CD8-positive, alpha-beta T cell (primary cell): ENCODE measurements at regions of chr16 and their contacts with region 1.

Region 1: GRCh38 chr16:21708533-21709115 is 44.9 kb downstream of the OTOA start:
- DNase-seq: peak; percentile 76 to 90 (median 82)
- ATAC-seq: peak; percentile 84
- H3K4me3 ChIP-seq: no peak overlapping the region
- H3K4me3 Mint-ChIP-seq: no peak overlapping the region
- H3K27ac ChIP-seq: no peak overlapping the region
- H3K27ac Mint-ChIP-seq: no peak overlapping the region
- H3K4me1 ChIP-seq: peaks cover 3% of the 10 kb centered on the region
- H3K4me1 Mint-ChIP-seq: peaks cover 2% of the 10 kb centered on the region
- H3K27me3 ChIP-seq: no peaks in the 10 kb centered on the region
- H3K27me3 Mint-ChIP-seq: no peaks in the 10 kb centered on the region
- CTCF ChIP-seq: peak; percentile 74

Region 2: GRCh38 chr16:21599233-21600030 is 109.2 kb before region 1 on chr16 and contains the start of gene METTL9:
- CTCF ChIA-PET with region 1: interaction called, 10 read pairs
- POLR2A ChIA-PET with region 1: no interaction called
- intact Hi-C with region 1: no loop called
- DNase-seq: peak; percentile 92 to 97 (median 94)
- ATAC-seq: peak; percentile 91
- H3K4me3 ChIP-seq: peak within 1 kb of the TSS; percentile 69 to 96
- H3K4me3 Mint-ChIP-seq: peak within 1 kb of the TSS; percentile 87
- H3K27ac ChIP-seq: peak within 1 kb of the TSS; percentile 84 to 91
- H3K27ac Mint-ChIP-seq: peak within 1 kb of the TSS; percentile 96
- H3K4me1 ChIP-seq: peaks cover 47% of the 10 kb centered on the region
- H3K4me1 Mint-ChIP-seq: peaks cover 62% of the 10 kb centered on the region
- H3K27me3 ChIP-seq: no peaks in the 10 kb centered on the region
- H3K27me3 Mint-ChIP-seq: no peaks in the 10 kb centered on the region
- CTCF ChIP-seq: no peak
- total RNA-seq, gene METTL9: 93.8 to 99.0 TPM

Region 3: DNA sequence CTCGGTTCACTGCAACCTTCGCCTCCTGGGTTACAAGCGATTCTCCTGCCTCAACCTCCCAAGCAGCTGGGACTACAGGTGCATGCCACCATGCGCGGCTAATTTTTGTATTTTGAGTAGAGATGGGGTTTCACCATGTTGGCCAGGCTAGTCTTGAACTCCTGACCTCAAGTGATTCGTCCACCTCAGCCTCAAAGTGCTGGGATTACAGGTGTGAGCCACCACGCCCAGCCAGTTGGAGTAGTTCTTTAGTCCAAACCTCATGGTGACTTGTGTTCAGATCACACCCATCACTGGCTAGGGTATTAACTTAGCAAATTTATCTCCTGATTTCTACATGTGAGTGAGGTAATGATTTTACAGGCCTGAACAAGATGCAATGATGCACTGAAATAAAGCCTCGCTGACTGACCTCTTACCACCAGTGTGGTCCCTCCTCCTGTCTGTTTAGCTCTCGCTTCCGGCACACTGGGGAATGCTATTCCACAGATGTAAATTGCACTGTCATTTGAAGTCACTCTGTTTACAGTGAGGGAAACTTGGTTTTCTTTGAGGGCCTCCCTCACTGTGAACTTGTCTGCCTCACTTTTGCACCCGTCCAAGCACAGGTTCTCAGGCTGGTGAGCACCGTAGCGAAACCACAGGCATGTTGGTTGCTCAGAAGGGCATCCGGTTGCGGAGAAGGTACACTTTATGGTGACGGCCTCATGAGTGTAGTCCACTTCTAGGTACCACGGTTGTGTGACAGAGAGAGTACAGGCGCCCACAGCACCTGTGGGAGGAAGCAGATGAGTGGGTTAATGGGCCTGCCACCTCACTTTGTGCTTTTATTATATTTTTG is 61.7 kb before region 1 on chr16:
- CTCF ChIA-PET with region 1: interaction called, 109 read pairs
- POLR2A ChIA-PET with region 1: no interaction called
- intact Hi-C with region 1: no loop called
- DNase-seq: peak; percentile 42 to 90 (median 71)
- ATAC-seq: peak; percentile 78
- H3K4me3 ChIP-seq: peak overlapping the region in 1 of 2 experiments; percentile 9
- H3K4me3 Mint-ChIP-seq: peak overlapping the region; percentile 74
- H3K27ac ChIP-seq: peak overlapping the region; percentile 58 to 85
- H3K27ac Mint-ChIP-seq: peak overlapping the region; percentile 95
- H3K4me1 ChIP-seq: peaks cover 51% of the 10 kb centered on the region
- H3K4me1 Mint-ChIP-seq: peaks cover 55% of the 10 kb centered on the region
- H3K27me3 ChIP-seq: no peaks in the 10 kb centered on the region
- H3K27me3 Mint-ChIP-seq: no peaks in the 10 kb centered on the region
- CTCF ChIP-seq: no peak

Region 4: GRCh38 chr16:21663889-21664647 is 44.6 kb before region 1 on chr16 and contains the start of gene OTOA:
- CTCF ChIA-PET with region 1: interaction called, 168 read pairs
- POLR2A ChIA-PET with region 1: no interaction called
- intact Hi-C with region 1: no loop called
- DNase-seq: peak in 6 of 9 experiments; percentile 27 to 63 (median 46)
- ATAC-seq: peak; percentile 67
- H3K4me3 ChIP-seq: peak within 1 kb of the TSS in 1 of 2 experiments; percentile 37
- H3K4me3 Mint-ChIP-seq: peak within 1 kb of the TSS; percentile 81
- H3K27ac ChIP-seq: no peak within 1 kb of the TSS
- H3K27ac Mint-ChIP-seq: no peak within 1 kb of the TSS
- H3K4me1 ChIP-seq: peaks cover 18% of the 10 kb centered on the region
- H3K4me1 Mint-ChIP-seq: peaks cover 26% of the 10 kb centered on the region
- H3K27me3 ChIP-seq: peaks cover 0 to 5% of the 10 kb centered on the region in 2 experiments
- H3K27me3 Mint-ChIP-seq: no peaks in the 10 kb centered on the region
- CTCF ChIP-seq: no peak
- total RNA-seq, gene OTOA: 0.14 TPM in 1 of 2 experiments, not detected in the other

Region 5: GRCh38 chr16:21684199-21684598 is 24.4 kb before region 1 on chr16:
- CTCF ChIA-PET with region 1: interaction called, 11 read pairs
- POLR2A ChIA-PET with region 1: no interaction called
- intact Hi-C with region 1: no loop called
- DNase-seq: peak in 6 of 9 experiments; percentile 23 to 55 (median 44)
- ATAC-seq: no peak
- H3K4me3 ChIP-seq: no peak overlapping the region
- H3K4me3 Mint-ChIP-seq: no peak overlapping the region
- H3K27ac ChIP-seq: no peak overlapping the region
- H3K27ac Mint-ChIP-seq: no peak overlapping the region
- H3K4me1 ChIP-seq: no peaks in the 10 kb centered on the region
- H3K4me1 Mint-ChIP-seq: no peaks in the 10 kb centered on the region
- H3K27me3 ChIP-seq: no peaks in the 10 kb centered on the region
- H3K27me3 Mint-ChIP-seq: peaks cover 7% of the 10 kb centered on the region
- CTCF ChIP-seq: peak; percentile 47

Region 6: DNA sequence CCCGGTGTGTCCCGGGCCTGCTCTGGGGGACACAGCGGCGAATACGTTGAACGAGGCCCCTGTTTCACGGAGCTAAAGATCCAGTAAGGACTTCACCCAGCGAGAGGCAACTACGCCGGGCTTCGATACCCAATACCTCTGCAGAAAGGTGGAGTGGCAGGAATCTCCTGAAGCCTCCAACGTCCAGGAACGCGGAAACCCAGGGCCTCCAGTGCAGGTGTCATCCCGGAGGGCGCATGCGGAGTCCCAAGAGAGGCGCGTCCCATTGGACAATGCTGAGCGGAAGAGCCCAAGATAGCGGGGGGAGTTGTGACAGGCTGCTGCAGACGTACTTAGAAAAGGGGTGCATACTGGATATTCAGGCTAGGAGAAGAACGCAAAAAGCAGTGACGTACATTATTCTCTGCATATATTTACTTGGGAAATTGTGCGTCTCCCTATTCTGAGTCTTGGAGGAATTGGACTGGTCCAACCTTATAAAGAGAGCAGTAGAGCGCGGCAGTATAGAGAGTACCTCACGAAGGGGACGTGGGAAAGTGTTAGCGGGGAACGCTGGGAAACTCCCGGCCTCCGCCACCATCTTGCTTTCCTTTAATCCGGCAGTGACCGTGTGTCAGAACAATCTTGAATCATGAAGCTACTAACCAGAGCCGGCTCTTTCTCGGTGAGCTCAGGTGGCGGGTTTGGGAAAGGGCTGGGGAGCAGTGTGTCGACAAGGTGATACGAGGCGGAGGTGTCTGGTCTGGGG is 244.3 kb after region 1 on chr16 and contains the start of gene UQCRC2:
- CTCF ChIA-PET with region 1: no interaction called
- POLR2A ChIA-PET with region 1: no interaction called
- intact Hi-C with region 1: loop called in 1 of 2 experiments (anchors 5 kb)
- DNase-seq: peak; percentile 70 to 96 (median 87)
- ATAC-seq: peak; percentile 89
- H3K4me3 ChIP-seq: peak within 1 kb of the TSS; percentile 85 to 87
- H3K4me3 Mint-ChIP-seq: peak within 1 kb of the TSS; percentile 100
- H3K27ac ChIP-seq: peak within 1 kb of the TSS; percentile 93 to 95
- H3K27ac Mint-ChIP-seq: peak within 1 kb of the TSS; percentile 98
- H3K4me1 ChIP-seq: peaks cover 36% of the 10 kb centered on the region
- H3K4me1 Mint-ChIP-seq: peaks cover 69% of the 10 kb centered on the region
- H3K27me3 ChIP-seq: no peaks in the 10 kb centered on the region
- H3K27me3 Mint-ChIP-seq: no peaks in the 10 kb centered on the region
- CTCF ChIP-seq: no peak
- total RNA-seq, gene UQCRC2: 177 to 186 TPM